Activated T-helper 1 cell treated with anti-CD3 and anti-CD28 coated beads, Interleukin-12 subunit alpha, Interleukin-12 subunit beta, Interleukin-2, Interleukin-4 antibody, amounts not matched to agents 30 ng/mL and 10 ng/mL and 1 ng/mL, durations not matched to agents 14 hours and 24 hours and 36 hours (primary cell): ENCODE measurements at regions of chr5 and their contacts with region 1.

Region 1: DNA sequence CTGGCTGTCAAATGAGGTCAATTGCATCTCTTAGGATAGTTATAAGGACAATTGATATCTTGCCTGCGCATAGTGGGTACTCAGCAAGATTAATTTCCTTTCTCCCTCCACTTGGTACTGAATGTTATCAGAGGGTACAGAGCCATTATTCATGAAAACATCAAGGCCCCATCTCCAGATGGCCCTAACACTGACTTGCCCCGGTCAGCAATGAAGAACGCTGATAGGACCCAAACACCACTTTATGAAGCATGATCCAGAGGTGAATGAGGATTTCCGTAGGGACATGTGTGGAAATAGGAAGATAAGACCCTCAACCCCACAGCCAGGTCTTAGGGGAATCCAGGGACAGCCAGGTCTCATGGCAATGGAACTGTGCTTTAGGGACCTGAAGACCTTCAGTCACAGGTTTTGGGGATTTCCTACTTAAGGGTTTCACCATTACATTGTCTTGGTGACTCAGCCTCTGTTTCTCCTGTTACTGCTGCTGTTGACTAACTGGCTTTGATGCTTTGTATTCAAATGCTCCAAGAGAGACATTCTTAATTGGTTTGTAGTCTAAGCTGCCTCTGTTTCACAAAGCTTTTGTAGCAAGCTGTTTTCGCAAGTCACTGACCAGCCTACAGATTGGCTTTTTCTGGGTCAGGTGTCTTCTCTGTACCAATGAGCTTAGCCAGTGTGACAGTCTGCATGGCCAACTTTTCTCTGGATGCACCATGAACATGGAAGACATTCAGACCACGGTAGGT is 35.3 kb upstream of the IQGAP2 start:
- DNase-seq: peak; percentile 23
- H3K4me3 Mint-ChIP-seq: no peak overlapping the region
- H3K27ac Mint-ChIP-seq: peak overlapping the region; percentile 71
- H3K4me1 Mint-ChIP-seq: peaks cover 29% of the 10 kb centered on the region
- H3K27me3 Mint-ChIP-seq: no peaks in the 10 kb centered on the region

Region 2: GRCh38 chr5:76325876-76326491 is 41.8 kb before region 1 on chr5:
- intact Hi-C with region 1: loop called (anchors 2 kb)
- DNase-seq: peak; percentile 50
- H3K4me3 Mint-ChIP-seq: peak overlapping the region; percentile 44
- H3K27ac Mint-ChIP-seq: peak overlapping the region; percentile 84
- H3K4me1 Mint-ChIP-seq: peaks cover 63% of the 10 kb centered on the region
- H3K27me3 Mint-ChIP-seq: no peaks in the 10 kb centered on the region